ENCODE measurements at regions of chr1 and their contacts with region 1.

Region 1: DNA sequence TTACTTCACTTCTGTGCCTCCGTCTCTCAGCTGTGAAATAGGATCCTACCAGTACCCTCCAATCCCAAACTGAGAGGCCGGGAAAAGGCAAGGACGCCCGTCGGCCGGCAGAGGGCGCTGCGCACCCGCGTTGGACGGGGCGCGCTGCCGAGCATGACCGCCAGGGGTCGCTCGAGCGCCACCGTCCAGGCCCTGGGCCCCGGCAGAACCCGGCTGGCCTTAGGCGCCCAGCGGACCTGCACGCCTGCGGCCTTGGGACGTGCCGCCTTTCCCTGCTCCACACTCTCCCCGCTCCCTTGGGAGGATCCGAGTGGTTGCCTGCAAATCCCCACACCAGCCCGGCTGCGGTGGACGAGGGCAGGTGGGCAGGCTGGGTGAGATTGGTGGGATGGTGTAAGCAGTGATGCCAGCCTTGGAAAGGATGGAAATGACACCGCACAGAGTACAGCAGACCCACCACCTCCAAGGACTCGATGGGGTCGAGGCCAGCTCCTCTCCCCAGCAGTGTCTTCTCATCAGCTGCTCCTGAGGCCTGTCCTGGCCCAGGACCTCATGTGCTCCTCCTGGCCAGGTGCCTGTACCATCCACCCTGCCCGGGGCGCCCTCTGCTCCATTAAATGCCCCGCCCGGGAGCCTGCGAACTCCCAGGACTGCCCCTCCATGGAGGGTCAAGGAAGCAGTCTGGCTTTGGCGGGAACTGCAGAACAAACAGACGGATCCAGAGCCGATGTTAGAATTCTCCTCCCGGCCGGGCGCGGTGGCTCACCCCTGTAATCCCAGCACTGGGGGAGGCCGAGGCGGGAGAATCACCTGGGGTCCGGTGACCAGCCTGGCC is 47.4 kb upstream of the LBR start:
- DNase-seq: peak in 1 of 2 donors; percentile 91
- H3K4me3 ChIP-seq: no peak overlapping the region
- CTCF ChIP-seq: peak in 2 of 3 donors; percentile 97 to 99
- POLR2A ChIP-seq: no peak

Region 2: GRCh38 chr1:225766967-225767633 is 291.9 kb after region 1 on chr1:
- intact Hi-C with region 1: loop called (anchors 10 kb)
- DNase-seq: peak; percentile 26 to 83
- H3K4me3 ChIP-seq: no peak overlapping the region
- CTCF ChIP-seq: no peak
- POLR2A ChIP-seq: no peak

Region 3: GRCh38 chr1:225845571-225846259 is 370.5 kb after region 1 on chr1:
- intact Hi-C with region 1: loop called (anchors 5 kb)
- DNase-seq: peak; percentile 73 to 92
- H3K4me3 ChIP-seq: no peak overlapping the region
- CTCF ChIP-seq: peak in 1 of 3 donors; percentile 43
- POLR2A ChIP-seq: no peak

Region 4: GRCh38 chr1:225977937-225978748 is 502.9 kb after region 1 on chr1:
- intact Hi-C with region 1: loop called (anchors 2 kb)
- DNase-seq: no peak
- H3K4me3 ChIP-seq: no peak overlapping the region
- CTCF ChIP-seq: no peak
- POLR2A ChIP-seq: no peak

Measured in lower leg skin (tissue), 4 donors.